Activated naive CD4-positive, alpha-beta T cell treated with anti-CD3 and anti-CD28 coated beads for 36 hours (primary cell): ENCODE measurements at regions of chr4 and their contacts with region 1.

Region 1: GRCh38 chr4:82268050-82268825 is 105.6 kb downstream of the HNRNPD start:
- DNase-seq: peak; percentile 70
- H3K4me3 Mint-ChIP-seq: no peak overlapping the region
- H3K27ac Mint-ChIP-seq: no peak overlapping the region
- H3K4me1 Mint-ChIP-seq: peaks cover 18% of the 10 kb centered on the region
- H3K27me3 Mint-ChIP-seq: no peaks in the 10 kb centered on the region

Region 2: DNA sequence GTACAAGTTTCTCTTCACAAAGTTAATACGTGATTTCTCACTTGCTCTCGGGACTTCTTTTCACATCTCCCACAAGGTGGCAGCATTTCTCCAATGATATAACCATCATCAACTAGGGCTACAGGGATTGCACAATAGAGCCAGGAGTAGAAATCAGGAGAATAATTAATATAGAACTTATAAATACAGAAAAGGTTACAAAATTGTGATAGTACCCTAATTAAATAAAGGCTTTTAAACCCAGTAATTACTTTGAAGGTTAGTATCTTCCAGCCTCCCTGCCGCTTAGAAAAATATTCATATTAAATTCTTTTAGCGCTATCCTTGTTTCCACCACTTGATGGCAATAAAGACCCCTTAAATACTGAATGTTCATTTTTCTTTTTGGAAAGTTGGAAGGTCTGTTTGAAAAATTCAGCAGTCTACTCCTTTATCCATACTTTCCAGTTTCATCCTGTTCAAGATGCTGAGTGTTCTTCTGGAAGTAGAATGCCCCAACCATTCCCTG is 862.3 kb before region 1 on chr4:
- CTCF ChIA-PET with region 1: interaction called, 6 read pairs
- intact Hi-C with region 1: loop called (anchors 1 kb)
- DNase-seq: peak; percentile 52
- H3K4me3 Mint-ChIP-seq: no peak overlapping the region
- H3K27ac Mint-ChIP-seq: no peak overlapping the region
- H3K4me1 Mint-ChIP-seq: peaks cover 3% of the 10 kb centered on the region
- H3K27me3 Mint-ChIP-seq: no peaks in the 10 kb centered on the region

Region 3: GRCh38 chr4:81913427-81913879 is 354.8 kb before region 1 on chr4:
- CTCF ChIA-PET with region 1: interaction called, 4 read pairs
- intact Hi-C with region 1: loop called (anchors 2 kb)
- DNase-seq: peak; percentile 74
- H3K4me3 Mint-ChIP-seq: no peak overlapping the region
- H3K27ac Mint-ChIP-seq: no peak overlapping the region
- H3K4me1 Mint-ChIP-seq: peaks cover 2% of the 10 kb centered on the region
- H3K27me3 Mint-ChIP-seq: peaks cover 8% of the 10 kb centered on the region

Region 4: DNA sequence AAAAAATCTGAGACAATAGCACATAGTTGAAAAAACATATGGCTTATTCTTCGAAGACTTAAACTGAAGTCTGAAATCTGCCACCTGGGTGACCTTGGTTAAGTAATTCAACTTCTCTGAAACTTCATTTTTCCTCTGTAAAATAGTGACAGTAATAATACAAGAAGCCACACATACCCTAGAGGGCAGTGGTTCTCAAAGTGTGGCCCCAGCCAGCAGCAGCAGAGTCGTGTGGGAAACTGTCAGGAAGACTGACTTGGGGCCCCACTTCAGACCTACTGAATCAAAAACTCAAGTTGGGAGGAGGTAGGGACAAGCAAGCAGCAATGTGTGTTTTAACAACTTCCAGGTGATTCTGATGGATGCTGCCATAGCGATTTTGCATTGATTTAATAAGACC is 144.3 kb before region 1 on chr4:
- CTCF ChIA-PET with region 1: interaction called, 14 read pairs
- intact Hi-C with region 1: loop called (anchors 2 kb)
- DNase-seq: peak; percentile 28
- H3K4me3 Mint-ChIP-seq: no peak overlapping the region
- H3K27ac Mint-ChIP-seq: no peak overlapping the region
- H3K4me1 Mint-ChIP-seq: peaks cover 4% of the 10 kb centered on the region
- H3K27me3 Mint-ChIP-seq: no peaks in the 10 kb centered on the region

Region 5: GRCh38 chr4:82201805-82202641 is 66.2 kb before region 1 on chr4:
- CTCF ChIA-PET with region 1: interaction called, 3 read pairs
- intact Hi-C with region 1: loop called (anchors 1 kb)
- DNase-seq: peak; percentile 77
- H3K4me3 Mint-ChIP-seq: no peak overlapping the region
- H3K27ac Mint-ChIP-seq: no peak overlapping the region
- H3K4me1 Mint-ChIP-seq: no peaks in the 10 kb centered on the region
- H3K27me3 Mint-ChIP-seq: no peaks in the 10 kb centered on the region

Region 6: GRCh38 chr4:82293304-82293703 is 25.1 kb after region 1 on chr4:
- CTCF ChIA-PET with region 1: no interaction called
- intact Hi-C with region 1: no loop called
- DNase-seq: peak; percentile 21
- H3K4me3 Mint-ChIP-seq: no peak overlapping the region
- H3K27ac Mint-ChIP-seq: no peak overlapping the region
- H3K4me1 Mint-ChIP-seq: peaks cover 6% of the 10 kb centered on the region
- H3K27me3 Mint-ChIP-seq: no peaks in the 10 kb centered on the region